Heart right ventricle (tissue), 16 donors: ENCODE measurements at regions of chr5 and their contacts with region 1.

Region 1: DNA sequence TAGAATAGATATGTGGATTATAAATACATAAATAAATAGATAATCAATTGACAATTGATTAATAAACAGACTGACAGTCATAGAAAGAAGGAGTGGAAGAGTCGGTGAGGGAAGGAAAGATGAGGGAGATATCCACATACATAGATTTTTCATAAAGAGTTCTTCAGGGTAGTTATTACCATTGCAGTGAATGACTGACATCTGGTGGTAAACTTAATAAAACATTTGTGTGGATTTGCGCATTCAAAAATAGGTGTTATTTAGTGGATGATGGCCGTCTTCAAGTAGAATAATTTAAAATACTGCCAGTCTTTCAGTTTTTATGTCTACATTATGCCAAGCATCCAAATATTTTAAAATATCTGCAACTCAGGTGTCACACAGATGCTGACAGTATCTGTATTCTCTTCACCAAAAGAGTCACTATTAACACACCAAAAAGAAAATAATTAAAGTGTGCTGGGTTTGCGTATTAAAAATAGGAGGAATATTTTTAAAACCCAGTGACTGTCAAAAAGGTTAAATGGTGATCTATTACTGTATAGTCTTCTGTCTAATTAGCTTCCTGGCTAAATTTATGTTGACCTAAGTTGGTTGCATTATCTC is 78.8 kb downstream of the GIN1 start:
- DNase-seq: no peak
- ATAC-seq: no peak
- H3K4me3 ChIP-seq: no peak overlapping the region
- H3K27ac ChIP-seq: no peak overlapping the region
- H3K4me1 ChIP-seq: no peaks in the 10 kb centered on the region
- H3K27me3 ChIP-seq: no peaks in the 10 kb centered on the region
- CTCF ChIP-seq: peak; percentile 44 to 82 (median 63)

Region 2: GRCh38 chr5:102536323-102536928 is 504.7 kb before region 1 on chr5:
- intact Hi-C with region 1: loop called in 2 of 10 experiments (anchors 2 to 5 kb)
- DNase-seq: no peak
- ATAC-seq: no peak
- H3K4me3 ChIP-seq: no peak overlapping the region
- H3K27ac ChIP-seq: no peak overlapping the region
- H3K4me1 ChIP-seq: peaks cover 0 to 13% (median 0%) of the 10 kb centered on the region in 9 donors
- H3K27me3 ChIP-seq: no peaks in the 10 kb centered on the region
- CTCF ChIP-seq: peak in 7 of 9 donors; percentile 29 to 58 (median 41)

Region 3: GRCh38 chr5:103305829-103306228 is 264.7 kb after region 1 on chr5:
- intact Hi-C with region 1: no loop called
- DNase-seq: no peak
- ATAC-seq: no peak
- H3K4me3 ChIP-seq: no peak overlapping the region
- H3K27ac ChIP-seq: no peak overlapping the region
- H3K4me1 ChIP-seq: no peaks in the 10 kb centered on the region
- H3K27me3 ChIP-seq: no peaks in the 10 kb centered on the region
- CTCF ChIP-seq: no peak